ENCODE measurements at regions of chr1 and their contacts with region 1.

Region 1: DNA sequence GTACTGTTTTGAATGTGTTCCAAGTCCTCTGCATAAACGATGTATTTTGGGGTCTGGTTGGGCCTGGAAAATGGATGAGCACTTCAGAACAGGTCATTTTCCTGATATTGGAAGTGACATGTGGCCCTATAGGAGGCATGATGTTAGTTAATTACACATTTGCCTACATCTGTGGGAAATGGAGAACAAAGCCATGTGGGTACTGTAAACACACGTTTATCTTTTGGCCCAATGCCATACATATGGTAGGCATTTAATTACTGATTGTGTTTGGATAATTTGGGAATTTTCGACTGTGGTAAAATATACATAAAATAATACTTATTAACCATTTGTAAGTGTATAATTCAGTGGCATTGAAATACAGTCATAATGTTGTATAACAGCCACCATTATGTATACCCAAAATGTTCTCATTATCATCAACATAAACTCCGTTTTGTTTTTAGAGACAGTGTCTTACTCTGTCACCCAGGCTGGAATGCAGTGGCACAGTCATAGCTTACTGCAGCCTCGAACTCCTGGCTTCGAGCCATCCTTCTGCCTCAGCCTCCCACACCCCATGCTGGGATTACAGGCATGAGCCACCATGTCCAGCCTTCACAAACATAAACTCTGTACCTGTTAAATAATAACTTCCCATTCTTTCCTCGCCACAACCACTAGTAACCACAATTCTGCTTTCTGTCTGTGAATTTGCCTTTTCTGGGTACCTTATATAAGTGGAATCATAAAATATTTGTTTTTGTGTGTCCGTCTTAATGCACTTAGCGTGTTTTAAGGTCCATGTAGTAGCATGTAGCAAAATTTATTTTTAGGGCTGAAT is 11.9 kb upstream of the RNPEP start:
- DNase-seq: no peak
- ATAC-seq: no peak
- H3K4me3 ChIP-seq: no peak overlapping the region
- H3K27ac ChIP-seq: no peak overlapping the region
- H3K4me1 ChIP-seq: no peaks in the 10 kb centered on the region
- H3K27me3 ChIP-seq: no peaks in the 10 kb centered on the region
- CTCF ChIP-seq: no peak

Region 2: DNA sequence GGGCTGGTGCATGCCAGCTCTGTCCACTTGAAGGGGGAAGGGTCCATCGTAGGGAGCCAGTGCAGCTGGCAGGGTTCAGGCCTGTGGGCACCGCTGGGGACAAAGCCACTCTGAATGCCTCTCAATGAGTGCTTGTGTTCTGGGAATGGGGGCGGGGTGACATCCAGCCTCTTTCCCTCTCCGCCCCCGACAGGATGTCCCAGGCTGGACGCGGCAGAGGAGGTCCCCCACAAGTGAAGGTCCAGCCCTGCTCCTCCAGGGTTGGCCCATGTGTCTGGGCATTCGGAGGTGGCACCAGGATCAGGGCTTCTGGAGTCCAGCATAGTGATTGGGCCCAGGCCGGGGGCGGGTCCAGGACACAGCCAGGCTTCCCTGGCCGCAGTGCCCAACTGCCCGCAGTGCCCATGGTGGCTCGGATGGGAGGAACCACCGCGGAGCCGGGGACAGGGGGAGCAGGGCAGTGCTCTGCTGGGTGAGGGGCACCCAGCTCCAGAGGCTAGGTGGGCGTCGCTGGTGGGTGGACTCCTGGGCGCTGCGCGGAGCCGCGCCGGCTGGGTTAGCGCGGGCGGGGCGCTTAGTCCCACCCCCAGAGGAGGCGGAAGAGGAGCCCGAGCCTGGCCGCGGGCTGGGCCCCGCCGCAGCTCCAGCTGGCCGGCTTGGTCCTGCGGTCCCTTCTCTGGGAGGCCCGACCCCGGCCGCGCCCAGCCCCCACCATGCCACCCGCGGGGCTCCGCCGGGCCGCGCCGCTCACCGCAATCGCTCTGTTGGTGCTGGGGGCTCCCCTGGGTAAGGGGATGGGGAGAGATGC is 82.1 kb before region 1 on chr1 and contains the start of gene SHISA4:
- intact Hi-C with region 1: loop called (anchors 5 to 10 kb)
- DNase-seq: peak; percentile 56 to 93 (median 71)
- ATAC-seq: peak; percentile 92
- H3K4me3 ChIP-seq: peak within 1 kb of the TSS; percentile 69 to 70
- H3K27ac ChIP-seq: peak within 1 kb of the TSS; percentile 18 to 56
- H3K4me1 ChIP-seq: peaks cover 21 to 34% of the 10 kb centered on the region in 2 donors
- H3K27me3 ChIP-seq: peaks cover 0 to 46% of the 10 kb centered on the region in 2 donors
- CTCF ChIP-seq: no peak
- polyA plus RNA-seq, gene SHISA4: 15.7 to 20.8 (median 19.3) TPM

Region 3: GRCh38 chr1:201895913-201896807 is 74.4 kb before region 1 on chr1:
- intact Hi-C with region 1: loop called in 1 of 2 experiments (anchors 2 kb)
- DNase-seq: peak; percentile 67 to 94 (median 88)
- ATAC-seq: peak; percentile 93
- H3K4me3 ChIP-seq: no peak overlapping the region
- H3K27ac ChIP-seq: peak overlapping the region in 1 of 2 donors; percentile 11
- H3K4me1 ChIP-seq: peaks cover 4 to 5% of the 10 kb centered on the region in 2 donors
- H3K27me3 ChIP-seq: no peaks in the 10 kb centered on the region
- CTCF ChIP-seq: peak; percentile 88 to 91

Region 4: GRCh38 chr1:202034683-202035462 is 64.3 kb after region 1 on chr1:
- intact Hi-C with region 1: no loop called
- DNase-seq: peak in 3 of 4 donors; percentile 92 to 93 (median 92)
- ATAC-seq: peak; percentile 97
- H3K4me3 ChIP-seq: no peak overlapping the region
- H3K27ac ChIP-seq: peak overlapping the region; percentile 53 to 83
- H3K4me1 ChIP-seq: peaks cover 0 to 3% of the 10 kb centered on the region in 2 donors
- H3K27me3 ChIP-seq: no peaks in the 10 kb centered on the region
- CTCF ChIP-seq: no peak

Measured in left lung (tissue), 14 donors.